Posterior vena cava (tissue), 2 donors: ENCODE measurements at regions of chr2 and their contacts with region 1.

Region 1: DNA sequence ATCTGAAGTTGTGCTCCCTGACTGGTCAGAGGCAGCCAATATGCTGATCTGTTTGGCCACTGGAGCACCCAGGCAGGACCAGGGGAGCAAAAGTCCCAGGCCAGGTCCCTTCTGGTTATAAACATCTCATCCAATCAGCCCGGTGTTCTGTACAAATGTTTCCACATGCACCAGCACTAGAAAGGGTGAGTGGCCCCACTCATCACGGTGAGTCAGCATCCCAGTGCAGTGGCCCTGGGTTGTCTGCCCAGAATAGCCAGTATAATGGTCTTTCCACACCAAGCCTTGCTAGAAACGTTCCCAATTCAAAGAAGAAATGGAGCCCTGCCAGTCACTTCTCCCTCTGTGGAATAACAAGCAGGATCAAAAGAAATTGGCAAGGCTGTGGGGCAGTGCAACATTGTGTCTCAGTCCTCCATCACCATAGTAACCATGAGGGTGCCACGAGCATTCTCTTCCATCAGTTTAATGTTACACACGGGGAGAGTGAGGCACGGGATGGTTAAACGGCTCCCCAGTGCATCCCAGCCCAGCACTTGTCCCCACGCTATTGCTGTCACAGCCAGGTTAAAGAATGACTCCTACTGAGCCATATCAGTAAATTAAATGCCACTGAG is 174.9 kb downstream of the SEPTIN10 start:
- DNase-seq: peak; percentile 79

Region 2: DNA sequence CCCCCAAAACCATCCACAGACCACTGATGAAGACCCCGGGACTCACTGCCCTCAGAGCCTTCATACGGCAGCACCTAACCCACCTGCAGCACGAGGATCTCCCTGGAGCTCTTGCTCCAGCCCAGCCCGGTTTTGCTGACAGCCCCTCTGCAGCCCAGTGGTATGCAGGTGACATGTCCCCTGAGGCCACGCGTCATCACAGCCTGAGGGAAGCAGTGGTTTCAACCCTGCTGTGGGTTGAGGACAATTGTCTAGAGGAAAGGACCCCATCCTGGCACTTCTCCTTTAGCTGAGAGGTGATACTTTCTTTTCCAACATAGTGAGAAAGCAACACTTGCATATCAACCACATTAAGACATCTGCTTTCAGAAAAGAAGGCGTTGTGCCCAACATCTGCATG is 40.9 kb after region 1 on chr2:
- intact Hi-C with region 1: loop called in 1 of 2 experiments (anchors 1 kb)
- DNase-seq: peak; percentile 10

Region 3: DNA sequence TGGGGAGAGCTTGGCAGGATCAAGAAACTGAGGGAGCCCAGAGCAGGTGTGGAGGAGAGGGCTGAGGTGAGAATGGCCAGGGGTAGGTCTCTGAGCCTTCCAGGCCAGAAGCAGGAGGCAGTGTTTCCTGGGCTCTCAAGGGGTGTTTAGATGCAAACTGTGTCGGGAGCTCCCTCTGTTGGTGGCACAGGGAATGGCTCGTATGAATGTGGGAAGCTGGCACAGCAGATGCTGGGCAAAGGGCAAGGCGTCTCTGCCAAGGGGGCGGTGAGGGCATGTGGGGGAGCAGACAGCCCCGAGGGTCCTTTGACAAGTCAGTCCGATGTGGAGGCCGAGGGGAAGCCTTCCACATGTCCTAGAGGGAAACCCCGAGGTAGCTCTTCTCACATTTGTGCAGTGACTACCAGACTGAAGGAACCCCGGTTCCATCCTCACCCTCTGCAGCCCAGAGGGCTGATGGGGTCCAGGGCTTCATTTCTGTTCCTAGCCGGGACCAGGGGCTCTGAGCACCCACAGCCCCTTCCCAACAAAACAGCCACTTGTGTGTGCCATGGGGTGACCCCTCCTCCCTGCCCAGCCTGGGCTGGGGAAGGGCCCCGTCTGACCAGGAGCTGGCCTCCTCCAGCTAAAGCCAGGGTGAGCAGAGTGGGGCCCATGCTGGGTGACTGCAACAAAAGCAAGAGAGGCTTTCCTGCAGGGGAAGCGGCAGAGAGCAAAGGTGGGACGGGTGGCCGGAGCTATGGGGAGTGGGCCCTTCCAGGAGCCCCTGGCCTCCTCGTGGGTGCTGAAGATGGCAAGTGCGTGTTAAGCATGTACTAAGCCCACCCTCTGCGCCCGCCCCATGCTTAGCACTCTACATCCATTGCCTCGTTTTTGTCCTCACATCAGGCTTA is 71.5 kb after region 1 on chr2:
- intact Hi-C with region 1: no loop called
- DNase-seq: peak; percentile 93